ENCODE measurements at regions of chr16 and their contacts with region 1.

Region 1: GRCh38 chr16:56450986-56451752 is at the starts of genes NUDT21 and OGFOD1:
- DNase-seq: peak; percentile 93
- ATAC-seq: peak; percentile 97
- H3K4me3 ChIP-seq: peak within 1 kb of the TSS; percentile 94
- H3K27ac ChIP-seq: peak within 1 kb of the TSS; percentile 83
- H3K4me1 ChIP-seq: peaks cover 3% of the 10 kb centered on the region; the same call in 1 of the 2 replicates
- H3K27me3 ChIP-seq: no peaks in the 10 kb centered on the region
- CTCF ChIP-seq: no peak
- EP300 ChIP-seq: no peak
- POLR2A ChIP-seq: peak; percentile 92
- RAD21 ChIP-seq: no peak
- polyA plus RNA-seq, gene NUDT21: 70.1 to 120 TPM
- polyA plus RNA-seq, gene OGFOD1: 31.4 to 40.7 TPM

Region 2: GRCh38 chr16:56423584-56424400 is 27.4 kb before region 1 on chr16:
- CTCF ChIA-PET with region 1: interaction called, 9 read pairs
- POLR2A ChIA-PET with region 1: interaction called, 8 read pairs
- RAD21 ChIA-PET with region 1: interaction called, 6 read pairs
- SMC1A ChIA-PET with region 1: interaction called, 8 read pairs
- in situ Hi-C with region 1: no loop called
- intact Hi-C with region 1: loop called (anchors 2 kb)
- DNase-seq: peak; percentile 21
- ATAC-seq: peak; percentile 51
- H3K4me3 ChIP-seq: peak overlapping the region; percentile 78
- H3K27ac ChIP-seq: peak overlapping the region; percentile 60
- H3K4me1 ChIP-seq: peaks cover 12% of the 10 kb centered on the region
- H3K27me3 ChIP-seq: no peaks in the 10 kb centered on the region
- CTCF ChIP-seq: no peak
- EP300 ChIP-seq: no peak
- POLR2A ChIP-seq: no peak
- RAD21 ChIP-seq: no peak

Measured in GM12878 (cell line).